ENCODE measurements at regions of chr19 and their contacts with region 1.

Region 1: GRCh38 chr19:50777754-50778303 is 7.6 kb downstream of the GPR32 start:
- DNase-seq: no peak
- H3K4me3 Mint-ChIP-seq: no peak overlapping the region
- H3K27ac Mint-ChIP-seq: no peak overlapping the region
- H3K4me1 Mint-ChIP-seq: peaks cover 16% of the 10 kb centered on the region
- H3K27me3 Mint-ChIP-seq: peaks cover 47% of the 10 kb centered on the region

Region 2: DNA sequence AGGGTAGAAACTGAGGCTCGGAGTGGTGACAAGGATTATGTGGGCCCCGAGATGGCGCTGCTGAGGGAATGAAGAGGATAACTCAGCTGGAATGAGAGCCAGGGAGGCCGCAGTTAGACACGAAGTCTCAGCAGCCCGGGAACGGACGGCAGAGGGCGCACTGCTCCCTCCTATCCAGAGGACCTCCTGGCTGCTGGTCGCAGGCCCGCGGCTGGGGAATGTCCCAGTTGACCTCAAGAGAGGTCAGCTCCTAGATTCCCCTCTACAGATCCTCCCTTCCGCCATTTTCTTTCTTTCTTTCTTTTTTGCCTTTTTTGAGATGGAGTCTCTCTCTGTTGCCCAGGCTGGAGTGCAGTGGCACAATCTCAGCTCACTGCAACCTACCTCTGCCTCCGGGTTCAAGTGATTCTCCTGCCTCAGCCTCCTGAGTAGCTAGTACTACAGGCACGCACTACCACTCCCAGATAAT is 240.0 kb before region 1 on chr19:
- intact Hi-C with region 1: loop called (anchors 1 kb)
- DNase-seq: peak; percentile 31
- H3K4me3 Mint-ChIP-seq: no peak overlapping the region
- H3K27ac Mint-ChIP-seq: no peak overlapping the region
- H3K4me1 Mint-ChIP-seq: no peaks in the 10 kb centered on the region
- H3K27me3 Mint-ChIP-seq: peaks cover 4% of the 10 kb centered on the region

Region 3: GRCh38 chr19:50607874-50608785 is 169.7 kb before region 1 on chr19:
- intact Hi-C with region 1: loop called (anchors 1 kb)
- DNase-seq: peak; percentile 63
- H3K4me3 Mint-ChIP-seq: peak overlapping the region; percentile 32
- H3K27ac Mint-ChIP-seq: no peak overlapping the region
- H3K4me1 Mint-ChIP-seq: peaks cover 6% of the 10 kb centered on the region
- H3K27me3 Mint-ChIP-seq: peaks cover 10% of the 10 kb centered on the region

Region 4: GRCh38 chr19:50649433-50650391 is 128.1 kb before region 1 on chr19 and contains the start of gene C19orf81:
- intact Hi-C with region 1: no loop called
- DNase-seq: no peak
- H3K4me3 Mint-ChIP-seq: no peak within 1 kb of the TSS
- H3K27ac Mint-ChIP-seq: no peak within 1 kb of the TSS
- H3K4me1 Mint-ChIP-seq: no peaks in the 10 kb centered on the region
- H3K27me3 Mint-ChIP-seq: peaks cover 7% of the 10 kb centered on the region
- total RNA-seq, gene C19orf81: not detected in 2 replicates

Region 5: GRCh38 chr19:50669302-50670101 is 108.3 kb before region 1 on chr19:
- intact Hi-C with region 1: loop called (anchors 1 kb)
- DNase-seq: peak; percentile 24
- H3K4me3 Mint-ChIP-seq: no peak overlapping the region
- H3K27ac Mint-ChIP-seq: no peak overlapping the region
- H3K4me1 Mint-ChIP-seq: no peaks in the 10 kb centered on the region
- H3K27me3 Mint-ChIP-seq: peaks cover 49% of the 10 kb centered on the region

Region 6: DNA sequence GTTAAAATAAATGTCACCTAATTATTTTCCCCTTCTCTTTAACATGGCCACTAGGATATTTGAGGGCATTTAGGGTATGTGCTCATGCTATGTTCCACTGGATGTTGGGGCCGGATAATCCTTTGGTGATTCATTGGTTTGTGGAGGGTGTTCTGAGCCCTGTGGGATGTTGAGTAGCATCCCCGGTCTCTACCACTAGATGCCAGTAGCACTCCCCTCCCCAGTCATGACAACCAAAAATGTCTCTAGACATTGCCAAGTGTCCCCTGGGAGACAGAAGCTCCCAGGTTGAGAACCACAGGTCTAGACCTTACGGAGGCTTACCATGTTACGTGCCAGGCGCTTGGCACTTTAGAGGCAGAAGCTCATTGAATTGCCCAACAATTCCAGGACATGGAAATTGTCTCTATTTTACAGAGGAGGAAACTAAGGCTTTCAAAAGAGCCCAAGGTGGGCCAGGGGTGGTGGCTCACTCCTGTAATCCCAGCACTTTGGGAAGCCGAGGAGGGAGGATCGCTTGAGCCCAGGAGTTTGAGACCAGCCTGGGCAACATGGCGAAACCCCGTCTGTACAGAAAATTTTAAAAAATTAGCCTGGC is 72.3 kb before region 1 on chr19:
- intact Hi-C with region 1: loop called (anchors 1 kb)
- DNase-seq: no peak
- H3K4me3 Mint-ChIP-seq: no peak overlapping the region
- H3K27ac Mint-ChIP-seq: no peak overlapping the region
- H3K4me1 Mint-ChIP-seq: no peaks in the 10 kb centered on the region
- H3K27me3 Mint-ChIP-seq: peaks cover 13% of the 10 kb centered on the region

Region 7: GRCh38 chr19:50724522-50725217 is 53.2 kb before region 1 on chr19:
- intact Hi-C with region 1: loop called (anchors 1 kb)
- DNase-seq: peak; percentile 97
- H3K4me3 Mint-ChIP-seq: peak overlapping the region; percentile 85
- H3K27ac Mint-ChIP-seq: peak overlapping the region; percentile 78
- H3K4me1 Mint-ChIP-seq: no peaks in the 10 kb centered on the region
- H3K27me3 Mint-ChIP-seq: peaks cover 38% of the 10 kb centered on the region

Region 8: DNA sequence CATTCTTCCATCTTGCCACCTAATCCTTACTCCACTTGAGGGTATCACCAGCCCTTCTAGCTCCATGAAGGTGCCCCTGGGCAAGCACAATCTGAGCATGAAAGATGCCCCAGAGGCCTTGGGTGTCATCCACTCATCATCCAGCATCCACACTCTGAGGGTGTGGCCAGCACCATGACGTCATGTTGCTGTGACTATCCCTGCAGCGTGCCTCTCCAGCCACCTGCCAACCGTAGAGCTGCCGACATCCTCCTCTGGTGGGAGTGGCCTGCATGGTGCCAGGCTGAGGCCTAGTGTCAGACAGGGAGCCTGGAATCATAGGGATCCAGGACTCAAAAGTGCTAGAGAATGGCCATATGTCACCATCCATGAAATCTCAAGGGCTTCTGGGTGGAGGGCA is 73.8 kb after region 1 on chr19:
- intact Hi-C with region 1: no loop called
- DNase-seq: no peak
- H3K4me3 Mint-ChIP-seq: no peak overlapping the region
- H3K27ac Mint-ChIP-seq: no peak overlapping the region
- H3K4me1 Mint-ChIP-seq: no peaks in the 10 kb centered on the region
- H3K27me3 Mint-ChIP-seq: peaks cover 9% of the 10 kb centered on the region